Body of pancreas (tissue), 4 donors: ENCODE measurements at regions of chr1 and their contacts with region 1.

Region 1: GRCh38 chr1:26102526-26102925 is 9.1 kb upstream of the PDIK1L start:
- DNase-seq: no peak
- ATAC-seq: no peak
- H3K4me3 ChIP-seq: no peak overlapping the region
- H3K27ac ChIP-seq: no peak overlapping the region
- H3K4me1 ChIP-seq: peaks cover 14% of the 10 kb centered on the region
- H3K27me3 ChIP-seq: no peaks in the 10 kb centered on the region
- CTCF ChIP-seq: no peak
- POLR2A ChIP-seq: no peak

Region 2: GRCh38 chr1:26145041-26145959 is 42.8 kb after region 1 on chr1:
- intact Hi-C with region 1: loop called (anchors 5 kb)
- DNase-seq: peak; percentile 88 to 92 (median 90)
- ATAC-seq: peak; percentile 95
- H3K4me3 ChIP-seq: no peak overlapping the region
- H3K27ac ChIP-seq: no peak overlapping the region
- H3K4me1 ChIP-seq: peaks cover 6% of the 10 kb centered on the region
- H3K27me3 ChIP-seq: no peaks in the 10 kb centered on the region
- CTCF ChIP-seq: peak; percentile 48 to 90 (median 82)
- POLR2A ChIP-seq: no peak

Region 3: GRCh38 chr1:26161415-26162219 is 59.1 kb after region 1 on chr1:
- intact Hi-C with region 1: loop called (anchors 5 kb)
- DNase-seq: peak; percentile 64 to 77 (median 66)
- ATAC-seq: peak; percentile 75
- H3K4me3 ChIP-seq: no peak overlapping the region
- H3K27ac ChIP-seq: peak overlapping the region in 3 of 4 donors; percentile 29 to 54 (median 50)
- H3K4me1 ChIP-seq: peaks cover 27% of the 10 kb centered on the region
- H3K27me3 ChIP-seq: peaks cover 0 to 4% of the 10 kb centered on the region in 2 donors
- CTCF ChIP-seq: peak in 5 of 7 experiments; percentile 6 to 53 (median 28)
- POLR2A ChIP-seq: peak; percentile 33 to 65 (median 58)